Left lung (tissue), 14 donors: ENCODE measurements at regions of chr13 and their contacts with region 1.

Region 1: DNA sequence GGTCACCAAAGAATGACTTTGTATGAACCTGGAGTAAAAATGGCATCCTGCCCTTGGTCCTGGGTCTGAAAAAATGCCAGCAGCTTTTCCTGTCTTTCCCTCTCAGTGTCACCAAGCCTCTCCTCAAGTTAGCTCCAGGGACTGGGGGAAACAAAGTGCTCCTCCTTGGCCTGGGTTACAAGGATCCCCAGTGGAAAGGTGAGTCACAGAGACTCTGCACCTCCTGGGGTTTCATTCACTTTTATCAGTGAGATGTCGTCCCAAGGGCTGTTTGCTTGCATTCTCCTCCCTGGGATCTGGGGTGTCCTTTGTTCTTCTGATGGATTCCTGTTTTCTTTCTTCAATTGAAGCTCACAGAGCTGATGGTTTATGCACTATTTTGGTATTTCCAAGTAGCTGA is 93.2 kb upstream of the CSNK1A1L start:
- DNase-seq: no peak
- ATAC-seq: no peak
- H3K4me3 ChIP-seq: no peak overlapping the region
- H3K27ac ChIP-seq: no peak overlapping the region
- H3K4me1 ChIP-seq: no peaks in the 10 kb centered on the region
- H3K27me3 ChIP-seq: no peaks in the 10 kb centered on the region
- CTCF ChIP-seq: no peak

Region 2: DNA sequence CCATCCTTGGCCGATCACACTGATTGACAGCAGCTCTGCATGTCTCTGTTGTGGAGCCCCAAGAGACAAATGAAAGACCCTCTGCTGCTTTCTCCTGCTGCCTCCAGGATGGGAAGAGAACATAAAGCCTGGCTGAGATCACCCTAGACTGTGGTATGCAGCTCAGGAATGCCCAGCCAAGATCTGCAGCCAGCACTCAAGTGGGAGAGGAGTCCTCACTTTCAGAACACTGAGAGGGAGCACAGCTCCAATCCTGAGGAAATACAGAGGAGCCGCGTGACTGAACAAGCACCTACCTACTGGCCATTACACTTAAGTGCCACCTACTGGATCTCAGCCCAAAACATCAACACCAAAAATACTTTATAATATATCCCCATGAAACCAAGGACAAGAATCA is 196.9 kb after region 1 on chr13:
- intact Hi-C with region 1: loop called in 1 of 2 experiments (anchors 5 kb)
- DNase-seq: no peak
- ATAC-seq: no peak
- H3K4me3 ChIP-seq: no peak overlapping the region
- H3K27ac ChIP-seq: no peak overlapping the region
- H3K4me1 ChIP-seq: no peaks in the 10 kb centered on the region
- H3K27me3 ChIP-seq: no peaks in the 10 kb centered on the region
- CTCF ChIP-seq: no peak